Activated T-helper 1 cell treated with anti-CD3 and anti-CD28 coated beads, Interleukin-12 subunit alpha, Interleukin-12 subunit beta, Interleukin-2, Interleukin-4 antibody, amounts not matched to agents 30 ng/mL and 10 ng/mL and 1 ng/mL, durations not matched to agents 14 hours and 24 hours and 36 hours (primary cell): ENCODE measurements at regions of chr11 and their contacts with region 1.

Region 1: GRCh38 chr11:6315811-6316425 is 4.4 kb downstream of the CAVIN3 start:
- DNase-seq: no peak
- H3K4me3 Mint-ChIP-seq: no peak overlapping the region
- H3K27ac Mint-ChIP-seq: no peak overlapping the region
- H3K4me1 Mint-ChIP-seq: peaks cover 11% of the 10 kb centered on the region
- H3K27me3 Mint-ChIP-seq: peaks cover 49% of the 10 kb centered on the region

Region 2: GRCh38 chr11:6022956-6023355 is 293.0 kb before region 1 on chr11:
- intact Hi-C with region 1: loop called (anchors 1 kb)
- DNase-seq: peak; percentile 4
- H3K4me3 Mint-ChIP-seq: no peak overlapping the region
- H3K27ac Mint-ChIP-seq: no peak overlapping the region
- H3K4me1 Mint-ChIP-seq: no peaks in the 10 kb centered on the region
- H3K27me3 Mint-ChIP-seq: peaks cover 23% of the 10 kb centered on the region

Region 3: DNA sequence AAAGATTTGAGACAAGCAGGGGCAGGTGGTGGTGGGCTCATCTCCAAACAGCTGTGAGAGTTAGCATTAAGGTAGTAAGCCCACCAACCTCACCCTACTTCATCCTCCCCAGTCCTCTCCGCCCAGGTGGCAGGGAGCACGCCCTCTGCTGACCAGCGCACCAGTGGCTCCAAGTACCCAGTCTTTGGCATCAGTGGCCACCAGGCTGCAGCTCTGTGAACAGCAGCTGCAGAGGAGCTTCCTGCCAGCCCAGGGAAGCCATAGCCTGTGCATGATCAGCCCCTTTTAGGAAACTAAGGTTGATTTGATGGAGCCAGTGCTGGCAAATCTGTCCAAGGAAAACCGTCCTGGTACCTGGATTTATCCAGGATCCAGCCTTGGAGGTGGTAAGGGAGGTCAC is 17.3 kb before region 1 on chr11:
- intact Hi-C with region 1: loop called (anchors 1 kb)
- DNase-seq: no peak
- H3K4me3 Mint-ChIP-seq: no peak overlapping the region
- H3K27ac Mint-ChIP-seq: no peak overlapping the region
- H3K4me1 Mint-ChIP-seq: no peaks in the 10 kb centered on the region
- H3K27me3 Mint-ChIP-seq: peaks cover 10% of the 10 kb centered on the region

Region 4: GRCh38 chr11:6389921-6390724 is 74.2 kb after region 1 on chr11 and contains the start of gene SMPD1:
- intact Hi-C with region 1: loop called (anchors 1 kb)
- DNase-seq: peak; percentile 89
- H3K4me3 Mint-ChIP-seq: peak within 1 kb of the TSS; percentile 86
- H3K27ac Mint-ChIP-seq: peak within 1 kb of the TSS; percentile 98
- H3K4me1 Mint-ChIP-seq: peaks cover 20% of the 10 kb centered on the region
- H3K27me3 Mint-ChIP-seq: peaks cover 7% of the 10 kb centered on the region
- total RNA-seq, gene SMPD1: 8.5 and 9.4 TPM in 2 replicates

Region 5: GRCh38 chr11:6431861-6432260 is 115.9 kb after region 1 on chr11:
- intact Hi-C with region 1: no loop called
- DNase-seq: no peak
- H3K4me3 Mint-ChIP-seq: no peak overlapping the region
- H3K27ac Mint-ChIP-seq: no peak overlapping the region
- H3K4me1 Mint-ChIP-seq: peaks cover 6% of the 10 kb centered on the region
- H3K27me3 Mint-ChIP-seq: peaks cover 7% of the 10 kb centered on the region

Region 6: GRCh38 chr11:6481012-6481923 is 165.3 kb after region 1 on chr11 and contains the starts of genes ARFIP2 and TIMM10B:
- intact Hi-C with region 1: loop called (anchors 5 kb)
- DNase-seq: peak; percentile 97
- H3K4me3 Mint-ChIP-seq: peak within 1 kb of the TSS; percentile 94
- H3K27ac Mint-ChIP-seq: peak within 1 kb of the TSS; percentile 94
- H3K4me1 Mint-ChIP-seq: peaks cover 40% of the 10 kb centered on the region
- H3K27me3 Mint-ChIP-seq: no peaks in the 10 kb centered on the region
- total RNA-seq, gene ARFIP2: 51.5 and 53.8 TPM in 2 replicates
- total RNA-seq, gene TIMM10B: 38.8 and 42.7 TPM in 2 replicates

Region 7: GRCh38 chr11:6746086-6746618 is 430.2 kb after region 1 on chr11:
- intact Hi-C with region 1: loop called (anchors 5 kb)
- DNase-seq: peak; percentile 40
- H3K4me3 Mint-ChIP-seq: no peak overlapping the region
- H3K27ac Mint-ChIP-seq: no peak overlapping the region
- H3K4me1 Mint-ChIP-seq: no peaks in the 10 kb centered on the region
- H3K27me3 Mint-ChIP-seq: no peaks in the 10 kb centered on the region